A673 (cell line): ENCODE measurements at regions of chr5 and their contacts with region 1.

Region 1: DNA sequence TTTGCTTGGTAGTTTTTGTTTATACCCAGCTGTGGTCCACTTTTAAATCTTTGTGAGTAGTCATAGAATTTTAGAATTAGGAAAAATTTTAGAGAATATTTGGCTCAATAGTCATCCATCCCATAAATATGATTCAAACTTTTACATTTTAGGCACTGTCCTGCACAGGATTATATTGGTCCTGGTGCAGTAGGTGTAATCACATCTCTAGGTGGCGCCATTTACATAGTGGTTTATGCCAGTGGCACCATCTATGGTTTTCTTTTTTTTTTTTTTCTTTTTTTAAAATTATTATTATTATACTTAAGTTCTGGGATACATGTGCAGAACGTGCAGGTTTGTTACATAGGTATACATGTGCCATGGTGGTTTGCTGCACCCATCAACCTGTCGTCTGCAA is 260.7 kb upstream of the KCNN2 start:
- DNase-seq: peak; percentile 33
- H3K4me3 ChIP-seq: no peak overlapping the region
- H3K27ac ChIP-seq: no peak overlapping the region
- H3K4me1 ChIP-seq: no peaks in the 10 kb centered on the region
- H3K27me3 ChIP-seq: no peaks in the 10 kb centered on the region
- CTCF ChIP-seq: peak; percentile 57

Region 2: DNA sequence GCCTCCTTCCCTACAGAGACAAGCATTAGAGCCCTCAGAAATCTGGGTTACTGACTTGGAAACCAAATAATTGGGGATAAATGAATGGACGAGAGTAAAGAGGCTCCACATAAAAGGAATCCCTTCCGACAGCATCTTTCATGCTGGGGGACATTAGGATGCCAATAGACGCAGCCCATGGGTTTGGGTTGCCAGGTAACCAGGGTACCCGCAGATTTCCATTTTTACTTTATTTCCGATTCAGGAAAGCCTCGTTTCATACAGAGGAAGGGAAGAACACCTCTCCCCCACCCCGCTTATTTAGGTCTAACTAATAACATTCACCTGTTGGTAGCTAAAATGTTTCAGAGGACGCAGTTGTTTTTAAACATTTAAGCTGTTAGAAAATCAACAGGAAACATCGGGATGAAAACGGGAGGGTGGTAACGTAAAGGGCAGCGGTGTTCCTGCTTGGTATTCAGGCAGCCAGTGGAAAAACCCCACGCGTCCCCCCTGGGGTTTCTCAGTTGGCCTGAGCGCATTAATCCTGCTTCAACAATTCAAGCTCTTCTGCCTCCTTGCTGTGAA is 408.2 kb before region 1 on chr5:
- CTCF ChIA-PET with region 1: no interaction called
- POLR2A ChIA-PET with region 1: no interaction called
- intact Hi-C with region 1: loop called (anchors 10 kb)
- DNase-seq: peak; percentile 68
- H3K4me3 ChIP-seq: no peak overlapping the region
- H3K27ac ChIP-seq: no peak overlapping the region
- H3K4me1 ChIP-seq: peaks cover 13% of the 10 kb centered on the region
- H3K27me3 ChIP-seq: peaks cover 15% of the 10 kb centered on the region
- CTCF ChIP-seq: no peak

Region 3: GRCh38 chr5:114449860-114450421 is 348.8 kb after region 1 on chr5:
- CTCF ChIA-PET with region 1: no interaction called
- POLR2A ChIA-PET with region 1: no interaction called
- intact Hi-C with region 1: loop called (anchors 2 kb)
- DNase-seq: peak; percentile 65
- H3K4me3 ChIP-seq: no peak overlapping the region
- H3K27ac ChIP-seq: no peak overlapping the region
- H3K4me1 ChIP-seq: no peaks in the 10 kb centered on the region
- H3K27me3 ChIP-seq: peaks cover 14% of the 10 kb centered on the region
- CTCF ChIP-seq: peak; percentile 87

Region 4: GRCh38 chr5:114467729-114468128 is 366.6 kb after region 1 on chr5:
- CTCF ChIA-PET with region 1: no interaction called
- POLR2A ChIA-PET with region 1: no interaction called
- intact Hi-C with region 1: no loop called
- DNase-seq: no peak
- H3K4me3 ChIP-seq: no peak overlapping the region
- H3K27ac ChIP-seq: no peak overlapping the region
- H3K4me1 ChIP-seq: no peaks in the 10 kb centered on the region
- H3K27me3 ChIP-seq: no peaks in the 10 kb centered on the region
- CTCF ChIP-seq: no peak

Region 5: GRCh38 chr5:114789773-114790402 is 688.7 kb after region 1 on chr5:
- CTCF ChIA-PET with region 1: no interaction called
- POLR2A ChIA-PET with region 1: no interaction called
- intact Hi-C with region 1: loop called (anchors 5 kb)
- DNase-seq: peak; percentile 43
- H3K4me3 ChIP-seq: no peak overlapping the region
- H3K27ac ChIP-seq: no peak overlapping the region
- H3K4me1 ChIP-seq: no peaks in the 10 kb centered on the region
- H3K27me3 ChIP-seq: no peaks in the 10 kb centered on the region
- CTCF ChIP-seq: peak; percentile 60